IMR-90 (cell line): ENCODE measurements at regions of chr16 and their contacts with region 1.

Region 1: DNA sequence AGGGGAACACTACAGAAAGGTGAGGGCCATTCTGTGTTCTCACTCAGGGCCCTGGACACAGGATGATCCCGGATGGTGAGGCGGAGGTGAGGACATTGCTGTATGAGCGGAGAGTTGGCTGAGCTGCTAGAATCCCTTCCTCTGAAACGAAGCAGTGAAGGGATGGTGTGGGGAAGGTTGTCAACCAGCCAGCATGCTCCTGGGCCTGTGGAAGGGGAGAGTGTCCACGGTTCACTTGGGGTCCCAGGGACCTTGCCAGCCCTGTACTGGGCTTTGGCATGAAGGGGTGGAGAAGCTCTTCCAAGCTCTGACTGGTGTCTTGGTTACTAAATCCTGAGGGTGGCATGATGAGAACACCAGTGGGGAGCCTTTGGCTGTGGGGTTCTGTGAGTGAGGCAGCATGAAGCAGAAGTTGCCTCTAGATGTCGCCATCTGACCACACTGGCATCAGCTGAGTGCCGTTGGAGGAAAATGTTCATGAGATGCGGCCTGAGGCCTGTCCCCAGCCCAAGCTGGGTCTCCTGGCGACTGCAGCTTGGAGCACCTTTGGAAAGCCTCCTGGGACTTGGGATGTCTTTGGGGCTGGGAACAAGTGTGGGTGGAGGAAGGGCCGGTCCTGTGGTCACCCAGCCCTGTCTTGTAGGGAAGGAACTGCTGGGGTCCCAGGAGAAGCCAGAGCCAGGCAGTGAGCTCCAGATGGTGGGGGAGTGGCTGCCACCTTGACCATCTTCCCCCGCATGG is 14.8 kb downstream of the PDP2 start:
- DNase-seq: peak; percentile 76
- ATAC-seq: peak; percentile 85
- H3K4me3 ChIP-seq: no peak overlapping the region
- H3K27ac ChIP-seq: no peak overlapping the region
- H3K4me1 ChIP-seq: peaks cover 15% of the 10 kb centered on the region
- H3K27me3 ChIP-seq: no peaks in the 10 kb centered on the region
- CTCF ChIP-seq: peak; percentile 98
- POLR2A ChIP-seq: peak; percentile 59; the same call in 1 of the 2 replicates
- RAD21 ChIP-seq: peak; percentile 99

Region 2: DNA sequence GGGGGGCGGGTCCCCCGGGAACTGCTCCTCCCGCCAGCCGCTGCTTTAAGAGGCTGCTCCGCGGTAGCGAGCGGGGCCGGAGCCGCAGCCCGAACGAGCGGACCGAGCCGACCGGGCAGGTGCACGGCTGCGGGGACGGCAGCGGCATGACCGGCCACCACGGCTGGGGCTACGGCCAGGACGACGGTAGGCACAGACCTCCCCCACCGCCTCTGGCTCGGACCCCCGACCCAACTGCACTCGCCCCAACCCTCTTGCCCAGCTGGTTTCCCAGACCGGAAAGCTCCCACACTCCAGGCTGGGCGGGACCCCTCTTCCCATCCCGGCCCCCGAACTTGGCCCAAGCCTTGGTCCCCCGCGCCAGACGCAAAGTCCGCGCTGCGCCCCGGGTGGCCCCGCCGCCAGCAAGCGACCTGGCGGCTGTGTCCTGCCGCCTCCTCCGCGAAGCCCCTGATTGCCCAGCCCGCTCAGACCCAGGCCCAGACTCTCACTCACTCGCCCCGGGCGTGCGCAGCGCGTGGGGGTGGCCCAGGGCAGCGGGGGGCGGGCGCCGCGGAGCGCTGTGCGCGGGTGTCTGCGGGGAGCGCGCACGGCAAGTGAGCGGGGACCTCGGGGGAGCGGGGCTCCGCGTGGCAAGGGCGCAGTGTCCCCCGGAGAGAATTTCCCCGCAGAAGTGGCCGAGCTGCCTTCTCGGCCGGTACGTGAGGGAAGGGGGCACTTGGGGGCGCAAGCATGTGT is 50.6 kb before region 1 on chr16 and contains the start of gene CA7:
- CTCF ChIA-PET with region 1: no interaction called
- POLR2A ChIA-PET with region 1: no interaction called
- dilution Hi-C with region 1: no loop called
- in situ Hi-C with region 1: no loop called
- intact Hi-C with region 1: no loop called
- DNase-seq: no peak
- ATAC-seq: peak; percentile 66
- H3K4me3 ChIP-seq: peak within 1 kb of the TSS; percentile 30
- H3K27ac ChIP-seq: no peak within 1 kb of the TSS
- H3K4me1 ChIP-seq: no peaks in the 10 kb centered on the region; the same call in 1 of the 2 replicates
- H3K27me3 ChIP-seq: peaks cover 83% of the 10 kb centered on the region
- CTCF ChIP-seq: no peak
- POLR2A ChIP-seq: no peak
- RAD21 ChIP-seq: no peak
- total RNA-seq, gene CA7: not detected in 2 replicates

Region 3: DNA sequence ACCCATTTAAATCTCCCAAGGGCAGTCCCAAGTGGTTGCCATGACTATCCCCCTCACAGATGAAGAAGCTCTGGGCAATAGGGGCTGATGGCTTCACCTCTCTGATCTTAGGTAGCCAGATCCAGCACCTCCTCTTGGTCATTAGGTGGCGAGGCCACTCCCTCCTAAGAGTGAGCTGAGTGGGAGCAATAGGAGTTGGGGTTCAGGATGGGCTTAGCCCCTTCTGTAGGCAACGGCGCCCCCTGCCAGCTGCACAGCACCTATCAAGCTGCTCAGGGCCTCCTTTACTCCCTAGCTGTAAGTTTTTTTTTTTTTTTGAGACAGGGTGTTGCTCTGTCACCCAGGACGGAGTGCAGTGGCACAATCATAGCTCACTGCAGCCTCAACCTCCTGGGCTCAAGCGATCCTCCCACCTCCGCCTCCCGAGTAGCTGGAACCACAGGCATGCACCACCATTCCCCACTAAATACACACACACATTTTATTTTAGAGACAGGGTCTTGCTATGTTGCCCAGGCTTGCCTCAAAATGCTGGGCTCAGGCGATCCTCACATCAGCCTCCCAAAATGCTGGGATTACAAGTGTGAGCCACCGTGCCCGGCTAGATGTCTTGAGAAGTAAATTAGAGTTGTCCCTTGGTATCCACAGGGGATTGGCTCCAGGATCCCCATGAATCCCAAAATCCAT is 33.7 kb after region 1 on chr16:
- CTCF ChIA-PET with region 1: interaction called, 20 read pairs
- POLR2A ChIA-PET with region 1: interaction called, 3 read pairs
- dilution Hi-C with region 1: no loop called
- in situ Hi-C with region 1: loop called (anchors 5 kb)
- intact Hi-C with region 1: loop called (anchors 1 kb)
- DNase-seq: peak; percentile 35
- ATAC-seq: peak; percentile 13; the same call in 1 of the 2 replicates
- H3K4me3 ChIP-seq: no peak overlapping the region
- H3K27ac ChIP-seq: no peak overlapping the region
- H3K4me1 ChIP-seq: peaks cover 28% of the 10 kb centered on the region
- H3K27me3 ChIP-seq: peaks cover 6% of the 10 kb centered on the region; the same call in 1 of the 2 replicates
- CTCF ChIP-seq: peak; percentile 51
- POLR2A ChIP-seq: no peak
- RAD21 ChIP-seq: peak; percentile 59

Region 4: GRCh38 chr16:66934153-66934838 is 39.2 kb after region 1 on chr16 and contains the start of gene CIAO2B:
- CTCF ChIA-PET with region 1: interaction called, 20 read pairs
- POLR2A ChIA-PET with region 1: interaction called, 3 read pairs
- dilution Hi-C with region 1: no loop called
- in situ Hi-C with region 1: loop called (anchors 5 kb)
- intact Hi-C with region 1: loop called (anchors 2 kb)
- DNase-seq: peak; percentile 84
- ATAC-seq: peak; percentile 82
- H3K4me3 ChIP-seq: peak within 1 kb of the TSS; percentile 98
- H3K27ac ChIP-seq: peak within 1 kb of the TSS; percentile 98
- H3K4me1 ChIP-seq: peaks cover 9% of the 10 kb centered on the region
- H3K27me3 ChIP-seq: no peaks in the 10 kb centered on the region
- CTCF ChIP-seq: no peak
- POLR2A ChIP-seq: peak; percentile 89
- RAD21 ChIP-seq: no peak
- total RNA-seq, gene CIAO2B: 148 and 168 TPM in 2 replicates

Region 5: DNA sequence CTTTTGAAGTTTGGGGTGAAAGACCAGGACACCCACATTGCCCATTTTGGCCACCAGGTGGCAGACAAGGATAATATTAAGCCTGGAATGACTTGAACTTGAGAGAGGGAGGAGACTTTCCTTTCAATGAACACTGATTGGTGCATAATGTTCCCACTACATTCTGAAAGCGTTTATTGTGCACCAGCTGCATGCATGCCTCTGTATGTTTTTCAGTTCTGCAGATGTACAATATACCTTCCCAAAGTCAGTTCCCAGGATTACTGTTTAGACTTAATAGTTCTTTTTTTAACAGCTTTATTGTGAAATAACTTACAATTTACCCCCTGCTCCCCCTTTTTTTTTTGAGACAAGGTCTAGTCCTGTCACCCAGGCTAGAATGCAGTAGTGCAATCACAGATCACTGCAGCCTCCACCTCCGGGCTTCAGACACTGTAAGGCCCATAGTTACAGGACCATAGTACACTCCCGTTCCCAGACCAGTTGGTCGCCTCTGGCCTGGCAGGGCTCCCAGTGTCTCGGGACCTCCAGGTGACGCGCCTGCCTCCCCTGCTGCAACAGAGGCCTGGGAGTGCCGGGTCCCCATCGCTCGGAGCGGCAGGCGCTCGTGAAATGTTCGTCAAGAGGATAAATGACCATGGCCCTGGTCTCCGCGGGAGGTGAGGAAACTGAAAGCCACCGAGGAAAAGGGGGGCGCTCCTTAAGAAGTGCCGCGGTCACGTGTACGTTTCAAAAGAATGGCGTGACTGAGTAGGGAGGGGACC is 52.4 kb after region 1 on chr16:
- CTCF ChIA-PET with region 1: interaction called, 11 read pairs
- POLR2A ChIA-PET with region 1: no interaction called
- dilution Hi-C with region 1: no loop called
- in situ Hi-C with region 1: no loop called
- intact Hi-C with region 1: loop called (anchors 1 kb)
- DNase-seq: peak; percentile 82
- ATAC-seq: peak; percentile 88
- H3K4me3 ChIP-seq: peak overlapping the region; percentile 56
- H3K27ac ChIP-seq: no peak overlapping the region
- H3K4me1 ChIP-seq: peaks cover 6% of the 10 kb centered on the region
- H3K27me3 ChIP-seq: peaks cover 16% of the 10 kb centered on the region; the same call in 1 of the 2 replicates
- CTCF ChIP-seq: peak; percentile 82
- POLR2A ChIP-seq: no peak
- RAD21 ChIP-seq: peak; percentile 73